Activated naive CD8-positive, alpha-beta T cell treated with anti-CD3 and anti-CD28 coated beads, Interleukin-2, amount 10 ng/mL, durations not matched to agents 7 days and 5 days (primary cell): ENCODE measurements at regions of chr2 and their contacts with region 1.

Region 1: DNA sequence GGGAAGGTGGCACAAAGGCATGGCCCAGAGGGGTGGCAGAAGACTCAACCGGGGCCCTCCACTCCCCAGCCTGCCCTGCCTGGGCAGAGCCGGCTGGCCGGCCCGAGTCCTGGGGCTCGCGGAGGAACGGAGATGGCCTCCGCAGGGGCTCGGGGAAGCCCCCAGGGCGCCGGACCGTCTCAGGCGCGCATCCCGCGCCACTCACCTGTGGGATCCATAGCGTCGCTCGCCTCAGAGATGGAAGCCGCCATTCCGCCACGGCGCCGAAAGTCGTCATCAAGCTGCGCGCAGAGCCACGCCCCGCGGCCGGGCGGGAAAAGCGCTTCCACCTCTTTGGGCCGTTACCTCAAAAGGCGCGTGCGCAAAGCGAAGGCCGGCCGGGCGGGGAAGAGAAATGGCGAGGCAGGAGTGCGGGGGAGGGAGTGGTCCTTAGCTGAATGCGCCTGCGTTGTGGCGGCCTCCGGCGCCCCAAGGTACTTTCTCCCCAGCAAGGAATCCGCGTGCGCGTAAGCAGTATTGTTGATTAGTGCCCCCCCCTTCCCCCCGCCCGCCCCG is at the start of gene SMPD4:
- DNase-seq: peak; percentile 98
- ATAC-seq: peak; percentile 73
- H3K4me3 Mint-ChIP-seq: peak within 1 kb of the TSS; percentile 93
- H3K27ac Mint-ChIP-seq: peak within 1 kb of the TSS; percentile 93
- H3K4me1 Mint-ChIP-seq: peaks cover 13% of the 10 kb centered on the region
- H3K27me3 Mint-ChIP-seq: no peaks in the 10 kb centered on the region
- total RNA-seq, gene SMPD4: 67.3 to 74.2 TPM

Region 2: GRCh38 chr2:130169896-130170295 is 11.5 kb before region 1 on chr2:
- POLR2A ChIA-PET with region 1: interaction called, 26 read pairs
- DNase-seq: no peak
- ATAC-seq: no peak
- H3K4me3 Mint-ChIP-seq: peak overlapping the region; percentile 66
- H3K27ac Mint-ChIP-seq: peak overlapping the region; percentile 84
- H3K4me1 Mint-ChIP-seq: peaks cover 17% of the 10 kb centered on the region
- H3K27me3 Mint-ChIP-seq: no peaks in the 10 kb centered on the region

Region 3: DNA sequence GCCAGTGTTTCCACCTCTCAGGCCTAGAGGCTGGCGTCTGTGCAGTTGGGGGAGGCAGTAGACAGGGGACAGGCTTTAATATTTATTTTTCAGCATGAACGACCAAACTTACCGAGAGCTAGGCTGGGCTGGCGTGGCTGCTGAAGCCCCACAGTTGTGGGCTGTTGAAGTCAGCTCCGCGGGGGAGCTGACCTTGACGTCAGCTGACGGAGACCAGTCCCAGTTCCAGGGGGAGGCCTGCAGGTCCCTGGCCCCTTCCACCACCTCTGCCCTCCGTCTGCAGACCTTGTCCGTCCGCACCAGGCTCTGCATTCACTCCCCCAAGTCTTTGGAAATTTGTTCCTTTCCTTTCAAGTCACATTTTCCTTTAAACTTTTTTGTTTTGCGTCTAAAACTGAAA is 50.3 kb after region 1 on chr2:
- POLR2A ChIA-PET with region 1: no interaction called
- DNase-seq: no peak
- ATAC-seq: no peak
- H3K4me3 Mint-ChIP-seq: no peak overlapping the region
- H3K27ac Mint-ChIP-seq: no peak overlapping the region
- H3K4me1 Mint-ChIP-seq: no peaks in the 10 kb centered on the region
- H3K27me3 Mint-ChIP-seq: peaks cover 5% of the 10 kb centered on the region

Region 4: GRCh38 chr2:131492418-131493198 is 1311.2 kb after region 1 on chr2:
- POLR2A ChIA-PET with region 1: interaction called, 12 read pairs
- DNase-seq: peak; percentile 97
- ATAC-seq: peak; percentile 85
- H3K4me3 Mint-ChIP-seq: peak overlapping the region; percentile 97
- H3K27ac Mint-ChIP-seq: peak overlapping the region; percentile 99
- H3K4me1 Mint-ChIP-seq: peaks cover 34% of the 10 kb centered on the region
- H3K27me3 Mint-ChIP-seq: no peaks in the 10 kb centered on the region